PC-3 (cell line): ENCODE measurements at regions of chr4 and their contacts with region 1.

Region 1: GRCh38 chr4:48906206-48907173 is at the start of gene OCIAD2:
- DNase-seq: peak; percentile 66
- ATAC-seq: peak; percentile 54
- H3K4me3 ChIP-seq: peak within 1 kb of the TSS; percentile 94
- H3K27ac ChIP-seq: peak within 1 kb of the TSS; percentile 25
- H3K4me1 ChIP-seq: peaks cover 42% of the 10 kb centered on the region
- H3K27me3 ChIP-seq: no peaks in the 10 kb centered on the region
- CTCF ChIP-seq: peak; percentile 45
- total RNA-seq, gene OCIAD2: 169 and 255 TPM in 2 replicates

Region 2: DNA sequence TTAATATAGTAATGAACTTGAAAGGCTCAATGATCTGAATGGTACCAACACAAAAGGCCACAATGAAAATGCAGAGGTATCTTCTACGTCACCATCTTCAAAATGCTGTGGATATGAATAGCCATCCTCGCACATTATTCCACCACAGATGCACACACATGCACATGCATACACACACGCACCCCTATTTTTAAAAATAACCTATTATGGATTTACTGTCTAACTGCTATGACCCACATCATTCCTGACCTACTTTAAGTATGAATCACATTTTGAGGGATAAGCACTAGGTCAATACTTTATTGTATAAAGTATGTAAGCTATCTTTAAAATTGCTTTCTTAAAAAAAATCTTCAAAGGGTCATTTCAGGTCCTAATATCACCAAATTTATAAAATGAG is 1044.2 kb before region 1 on chr4:
- CTCF ChIA-PET with region 1: no interaction called
- POLR2A ChIA-PET with region 1: no interaction called
- intact Hi-C with region 1: no loop called
- DNase-seq: no peak
- ATAC-seq: no peak
- H3K4me3 ChIP-seq: no peak overlapping the region
- H3K27ac ChIP-seq: no peak overlapping the region
- H3K4me1 ChIP-seq: no peaks in the 10 kb centered on the region
- H3K27me3 ChIP-seq: no peaks in the 10 kb centered on the region
- CTCF ChIP-seq: no peak

Region 3: DNA sequence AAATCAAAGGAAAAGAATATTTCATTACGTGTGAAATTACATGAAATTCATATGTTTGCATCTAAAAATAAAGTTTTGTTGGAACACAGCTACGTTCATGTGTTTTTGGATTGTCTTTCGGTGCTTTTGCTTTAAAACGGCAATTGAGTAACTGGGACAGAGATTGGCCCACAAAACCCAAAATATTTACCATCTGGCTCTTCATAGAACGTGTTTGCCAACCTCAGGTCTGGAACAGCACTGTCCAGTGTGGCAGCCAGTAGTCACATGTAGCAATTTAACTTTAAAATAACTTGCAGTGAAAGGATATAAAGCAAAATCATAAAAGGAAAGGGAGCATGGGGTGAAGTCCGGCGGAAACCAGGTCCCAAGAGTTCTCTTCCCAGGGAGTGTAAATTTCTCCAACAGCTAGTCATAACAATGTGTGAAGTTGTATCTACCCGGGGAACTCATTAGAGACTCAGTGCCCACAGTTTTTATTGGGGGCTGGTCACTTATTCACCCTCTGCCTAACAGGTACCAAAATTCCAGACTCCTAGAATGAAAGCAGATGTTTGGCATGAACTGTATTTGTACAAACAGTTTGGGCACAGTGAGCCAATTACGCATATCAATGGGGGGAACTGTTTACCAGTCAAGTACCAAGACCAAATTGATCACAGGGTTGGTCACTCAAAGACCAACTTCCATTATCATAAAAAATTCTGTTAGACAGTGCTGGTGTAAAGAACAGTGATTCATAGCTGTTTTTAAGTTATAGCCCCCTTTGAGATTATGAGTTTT is 65.3 kb before region 1 on chr4:
- CTCF ChIA-PET with region 1: no interaction called
- POLR2A ChIA-PET with region 1: no interaction called
- intact Hi-C with region 1: no loop called
- DNase-seq: no peak
- ATAC-seq: no peak
- H3K4me3 ChIP-seq: no peak overlapping the region
- H3K27ac ChIP-seq: no peak overlapping the region
- H3K4me1 ChIP-seq: no peaks in the 10 kb centered on the region
- H3K27me3 ChIP-seq: no peaks in the 10 kb centered on the region
- CTCF ChIP-seq: no peak

Region 4: GRCh38 chr4:48858130-48858529 is 48.4 kb before region 1 on chr4:
- CTCF ChIA-PET with region 1: no interaction called
- POLR2A ChIA-PET with region 1: no interaction called
- intact Hi-C with region 1: loop called (anchors 10 kb)
- DNase-seq: no peak
- ATAC-seq: no peak
- H3K4me3 ChIP-seq: no peak overlapping the region
- H3K27ac ChIP-seq: no peak overlapping the region
- H3K4me1 ChIP-seq: no peaks in the 10 kb centered on the region
- H3K27me3 ChIP-seq: no peaks in the 10 kb centered on the region
- CTCF ChIP-seq: no peak

Region 5: GRCh38 chr4:48891028-48891619 is 15.4 kb before region 1 on chr4:
- CTCF ChIA-PET with region 1: no interaction called
- POLR2A ChIA-PET with region 1: no interaction called
- intact Hi-C with region 1: no loop called
- DNase-seq: no peak
- ATAC-seq: no peak
- H3K4me3 ChIP-seq: no peak overlapping the region
- H3K27ac ChIP-seq: no peak overlapping the region
- H3K4me1 ChIP-seq: no peaks in the 10 kb centered on the region
- H3K27me3 ChIP-seq: no peaks in the 10 kb centered on the region
- CTCF ChIP-seq: no peak

Region 6: DNA sequence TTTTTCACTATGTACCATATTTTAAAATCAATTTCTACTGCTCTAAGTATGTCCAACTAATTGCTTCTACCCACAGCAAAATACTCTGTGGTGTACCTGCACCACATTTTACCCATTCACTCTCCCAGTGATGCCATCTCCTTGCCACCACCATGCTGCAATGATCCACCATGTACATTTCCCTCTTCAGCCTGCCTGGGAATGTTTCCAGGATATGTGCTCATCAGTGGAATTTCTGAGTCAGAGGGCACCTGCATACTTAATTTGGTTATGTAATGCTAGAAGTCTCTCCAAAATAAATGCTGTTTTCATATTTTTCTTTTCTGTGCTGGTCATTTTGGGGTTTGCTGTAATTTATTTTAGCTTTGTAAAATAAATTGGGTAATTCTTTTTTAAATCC is 33.3 kb after region 1 on chr4:
- CTCF ChIA-PET with region 1: interaction called, 6 read pairs
- POLR2A ChIA-PET with region 1: no interaction called
- intact Hi-C with region 1: loop called (anchors 2 kb)
- DNase-seq: peak; percentile 92
- ATAC-seq: peak; percentile 25
- H3K4me3 ChIP-seq: no peak overlapping the region
- H3K27ac ChIP-seq: peak overlapping the region; percentile 1; the same call in 1 of the 2 replicates
- H3K4me1 ChIP-seq: peaks cover 25% of the 10 kb centered on the region
- H3K27me3 ChIP-seq: no peaks in the 10 kb centered on the region
- CTCF ChIP-seq: no peak

Region 7: GRCh38 chr4:48970471-48970921 is 64.0 kb after region 1 on chr4:
- CTCF ChIA-PET with region 1: no interaction called
- POLR2A ChIA-PET with region 1: no interaction called
- intact Hi-C with region 1: no loop called
- DNase-seq: peak; percentile 80
- ATAC-seq: peak; percentile 54
- H3K4me3 ChIP-seq: peak overlapping the region; percentile 21; the same call in 1 of the 2 replicates
- H3K27ac ChIP-seq: peak overlapping the region; percentile 89
- H3K4me1 ChIP-seq: peaks cover 37% of the 10 kb centered on the region
- H3K27me3 ChIP-seq: no peaks in the 10 kb centered on the region
- CTCF ChIP-seq: no peak